ENCODE measurements at regions of chr3 and their contacts with region 1.

Region 1: DNA sequence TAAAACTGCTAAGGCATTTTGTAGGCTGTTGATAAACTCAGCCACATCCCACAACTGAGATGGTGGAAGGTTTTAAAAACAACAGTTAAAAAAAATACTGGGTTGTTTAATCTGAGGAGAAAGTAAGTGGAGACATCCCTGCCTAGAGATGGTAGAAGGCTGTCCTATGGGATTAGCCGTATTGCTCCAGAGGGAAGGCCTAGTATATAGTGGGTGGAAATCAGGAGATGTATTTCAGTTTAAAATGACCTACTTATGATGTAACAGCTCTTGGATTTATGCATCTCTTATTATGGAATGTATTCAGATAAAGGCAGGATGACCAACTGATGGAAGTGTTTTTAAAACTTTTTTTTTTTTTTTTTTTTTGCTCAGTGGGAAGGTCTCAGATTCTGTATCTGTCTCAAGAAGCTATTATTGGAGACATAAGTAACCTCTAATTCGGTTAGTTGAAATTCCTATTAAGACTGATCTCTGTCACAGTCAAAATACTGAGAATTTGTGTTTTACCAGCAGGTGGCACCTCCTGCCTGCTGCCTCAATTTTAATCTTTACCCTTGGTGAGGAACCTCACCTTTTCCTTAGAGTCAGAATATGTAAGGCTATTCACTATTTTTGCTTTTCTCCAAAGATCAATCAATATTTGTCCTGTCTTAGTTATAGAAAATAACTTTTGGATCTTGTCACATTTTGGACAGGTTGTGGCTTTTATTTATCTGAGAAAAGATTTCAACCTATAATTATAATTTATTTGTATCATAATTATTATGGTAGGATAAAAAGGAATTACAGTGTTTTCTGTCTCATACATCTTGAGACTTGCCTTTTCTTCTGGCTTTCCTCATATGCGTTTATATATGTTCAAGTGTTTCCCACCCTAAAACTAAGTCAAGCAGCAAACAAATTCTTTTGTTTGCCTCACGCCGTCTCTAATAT is 63.0 kb downstream of the VPS8 start:
- DNase-seq: no peak
- H3K4me3 ChIP-seq: no peak overlapping the region
- H3K27ac ChIP-seq: no peak overlapping the region
- H3K4me1 ChIP-seq: no peaks in the 10 kb centered on the region
- H3K27me3 ChIP-seq: no peaks in the 10 kb centered on the region
- CTCF ChIP-seq: peak in 2 of 3 experiments; percentile 33 to 58

Region 2: GRCh38 chr3:184209146-184209923 is 665.6 kb before region 1 on chr3:
- intact Hi-C with region 1: no loop called
- DNase-seq: no peak
- H3K4me3 ChIP-seq: no peak overlapping the region
- H3K27ac ChIP-seq: no peak overlapping the region
- H3K4me1 ChIP-seq: no peaks in the 10 kb centered on the region
- H3K27me3 ChIP-seq: no peaks in the 10 kb centered on the region
- CTCF ChIP-seq: no peak

Region 3: DNA sequence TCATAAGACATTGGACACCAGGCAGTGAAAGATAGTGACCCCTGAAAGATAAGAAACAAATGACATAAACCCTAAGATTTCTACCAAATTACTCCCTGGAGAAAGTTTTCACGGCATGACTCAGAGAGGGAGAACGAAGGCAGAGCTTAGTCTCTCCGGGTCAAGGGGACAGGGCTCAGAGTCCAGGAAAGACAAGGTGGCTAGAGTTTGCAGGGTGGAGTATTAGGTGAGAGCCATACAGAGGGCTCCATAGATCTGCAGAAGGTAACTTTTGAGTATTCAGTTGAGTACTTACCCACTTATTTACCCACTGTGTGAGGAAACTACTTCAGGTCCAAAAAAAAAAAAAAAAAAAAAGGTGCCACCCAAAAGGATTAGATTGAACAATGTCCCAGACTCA is 134.7 kb after region 1 on chr3:
- intact Hi-C with region 1: no loop called
- DNase-seq: no peak
- H3K4me3 ChIP-seq: no peak overlapping the region
- H3K27ac ChIP-seq: no peak overlapping the region
- H3K4me1 ChIP-seq: no peaks in the 10 kb centered on the region
- H3K27me3 ChIP-seq: no peaks in the 10 kb centered on the region
- CTCF ChIP-seq: no peak

Region 4: GRCh38 chr3:185176750-185177359 is 301.9 kb after region 1 on chr3:
- intact Hi-C with region 1: loop called (anchors 5 kb)
- DNase-seq: no peak
- H3K4me3 ChIP-seq: no peak overlapping the region
- H3K27ac ChIP-seq: no peak overlapping the region
- H3K4me1 ChIP-seq: no peaks in the 10 kb centered on the region
- H3K27me3 ChIP-seq: no peaks in the 10 kb centered on the region
- CTCF ChIP-seq: peak; percentile 38 to 63 (median 63)

Region 5: DNA sequence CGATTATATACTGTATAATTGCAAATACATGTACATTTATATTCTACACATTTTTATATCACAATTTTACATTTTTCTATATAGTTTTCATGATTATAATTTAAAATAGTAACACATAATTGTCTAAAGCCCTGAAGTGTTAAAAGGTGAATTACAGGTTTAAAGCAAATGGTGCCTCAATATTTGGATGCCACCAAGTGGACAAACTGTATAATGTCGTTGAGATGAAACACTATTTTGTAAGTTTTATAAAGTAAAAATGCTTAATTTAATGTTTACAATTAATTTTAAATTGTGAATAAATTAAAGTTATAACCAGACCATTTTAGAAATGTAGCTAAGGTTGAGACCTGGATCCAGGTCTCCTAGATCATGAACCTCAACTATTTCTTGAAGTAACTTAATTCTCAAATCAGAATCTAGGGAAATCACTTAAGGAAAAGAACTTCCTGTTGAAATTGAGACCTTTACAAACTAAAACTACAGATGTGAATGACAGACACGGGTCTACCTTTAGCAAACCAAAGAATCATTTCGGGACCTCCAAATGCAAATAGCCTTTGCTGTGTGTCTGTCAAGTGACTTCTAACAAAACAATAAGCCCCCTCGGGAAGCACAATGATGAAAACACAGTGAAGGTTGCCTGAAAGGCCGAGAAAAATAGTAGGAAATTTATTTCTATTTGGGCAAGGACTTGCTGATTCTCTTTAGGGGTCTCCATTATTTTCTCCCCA is 341.1 kb after region 1 on chr3:
- intact Hi-C with region 1: loop called (anchors 1 kb)
- DNase-seq: no peak
- H3K4me3 ChIP-seq: peak overlapping the region; percentile 51 to 53
- H3K27ac ChIP-seq: peak overlapping the region; percentile 62 to 79
- H3K4me1 ChIP-seq: peaks cover 0 to 3% of the 10 kb centered on the region in 2 donors
- H3K27me3 ChIP-seq: no peaks in the 10 kb centered on the region
- CTCF ChIP-seq: peak in 1 of 3 experiments; percentile 57

Measured in ascending aorta (tissue), 2 donors.